ENCODE measurements at regions of chr2 and their contacts with region 1.

Region 1: DNA sequence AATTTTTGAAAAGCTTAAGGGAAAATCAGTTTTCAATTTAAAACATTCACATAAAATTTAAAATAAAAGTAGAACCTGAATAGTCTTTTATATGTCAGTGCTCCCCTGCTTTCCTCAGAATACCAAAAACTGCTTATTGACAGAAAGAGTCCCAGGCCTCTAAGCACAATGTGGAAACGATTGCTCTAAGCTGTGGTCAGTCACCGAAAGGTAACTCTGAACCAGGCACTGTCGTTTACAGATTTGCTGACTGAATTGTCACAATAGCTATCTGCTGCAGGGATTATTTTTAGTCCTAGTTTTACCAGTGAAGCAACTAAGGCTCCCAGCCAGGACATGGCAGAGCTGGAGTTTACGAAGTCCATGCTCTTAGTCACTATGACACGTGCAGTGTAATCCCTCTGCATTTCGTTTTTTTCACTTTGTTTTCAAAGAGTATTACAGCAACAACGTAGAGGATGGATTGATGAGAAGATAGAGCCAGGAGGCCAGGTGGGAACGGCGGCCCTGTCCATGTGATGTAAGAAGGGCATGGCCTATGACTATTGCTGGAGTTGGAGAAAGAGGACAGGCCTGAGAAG is 28.1 kb upstream of the TMEM247 start:
- DNase-seq: no peak
- ATAC-seq: no peak
- H3K4me3 ChIP-seq: no peak overlapping the region
- H3K27ac ChIP-seq: no peak overlapping the region
- H3K4me1 ChIP-seq: no peaks in the 10 kb centered on the region
- H3K27me3 ChIP-seq: no peaks in the 10 kb centered on the region
- CTCF ChIP-seq: no peak

Region 2: DNA sequence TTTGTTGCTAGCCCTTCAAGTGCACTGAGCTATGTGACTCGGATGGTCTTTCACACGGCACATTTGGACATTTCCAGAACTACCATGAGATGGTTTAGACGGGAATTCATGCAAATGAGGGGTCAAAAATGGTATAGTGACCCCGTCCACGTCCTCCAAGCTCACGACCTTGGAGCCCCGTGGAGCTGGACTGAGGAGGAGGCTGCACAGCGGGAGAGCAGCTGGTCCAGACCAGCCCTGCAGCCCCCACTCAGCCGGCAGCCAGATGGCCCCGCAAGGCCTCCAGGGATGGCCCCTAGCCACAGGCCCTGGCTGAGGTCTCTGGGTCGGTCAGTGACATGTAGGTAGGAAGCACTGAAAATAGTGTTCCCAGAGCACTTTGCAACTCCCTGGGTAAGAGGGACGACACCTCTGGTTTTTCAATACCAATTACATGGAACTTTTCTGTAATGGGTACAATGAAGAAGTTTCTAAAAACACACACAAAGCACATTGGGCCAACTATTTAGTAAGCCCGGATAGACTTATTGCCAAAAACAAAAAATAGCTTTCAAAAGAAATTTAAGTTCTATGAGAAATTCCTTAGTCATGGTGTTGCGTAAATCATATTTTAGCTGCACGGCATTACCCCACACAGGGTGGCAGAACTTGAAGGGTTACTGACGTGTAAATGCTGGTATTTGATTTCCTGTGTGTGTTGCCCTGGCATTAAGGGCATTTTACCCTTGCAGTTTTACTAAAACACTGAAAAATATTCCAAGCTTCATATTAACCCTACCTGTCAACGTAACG is 65.2 kb before region 1 on chr2:
- intact Hi-C with region 1: loop called in 1 of 2 experiments (anchors 10 kb)
- DNase-seq: no peak
- ATAC-seq: peak; percentile 17
- H3K4me3 ChIP-seq: no peak overlapping the region
- H3K27ac ChIP-seq: peak overlapping the region; percentile 53 to 81
- H3K4me1 ChIP-seq: peaks cover 0 to 40% of the 10 kb centered on the region in 2 donors
- H3K27me3 ChIP-seq: no peaks in the 10 kb centered on the region
- CTCF ChIP-seq: no peak

Region 3: DNA sequence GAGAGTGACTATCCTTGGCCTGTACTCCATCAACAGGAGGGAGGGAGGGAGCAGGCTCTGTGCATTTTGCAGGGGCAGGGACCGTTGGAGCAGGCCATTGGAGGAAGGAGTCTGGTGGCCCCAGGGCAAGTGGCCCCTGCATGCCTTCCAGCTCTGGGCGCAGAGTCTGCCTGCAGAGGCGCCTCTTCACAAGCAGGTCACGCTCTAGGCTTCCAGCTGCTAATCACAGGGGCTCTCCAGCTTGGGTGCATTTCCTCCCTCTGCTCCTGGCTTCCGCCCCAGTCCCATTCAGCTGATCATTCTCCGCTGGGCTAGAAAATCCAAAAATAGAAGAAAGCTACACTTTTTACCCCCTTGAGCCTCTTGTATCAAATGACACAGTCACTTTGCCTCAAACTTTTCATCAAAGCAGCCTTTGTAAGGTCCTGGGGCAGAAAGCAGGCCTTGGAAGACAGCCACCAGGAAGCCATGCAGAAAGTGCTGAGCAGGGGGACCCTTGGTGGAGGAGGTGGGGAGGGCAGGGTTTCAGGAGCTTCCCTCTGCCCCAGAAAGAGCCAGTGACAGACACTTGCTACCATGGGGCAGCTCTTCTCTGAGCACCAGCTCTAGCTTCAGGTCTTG is 39.4 kb after region 1 on chr2:
- intact Hi-C with region 1: no loop called
- DNase-seq: peak in 3 of 4 donors; percentile 65 to 86 (median 74)
- ATAC-seq: peak; percentile 67
- H3K4me3 ChIP-seq: no peak overlapping the region
- H3K27ac ChIP-seq: peak overlapping the region in 1 of 2 donors; percentile 27
- H3K4me1 ChIP-seq: peaks cover 0 to 15% of the 10 kb centered on the region in 2 donors
- H3K27me3 ChIP-seq: no peaks in the 10 kb centered on the region
- CTCF ChIP-seq: no peak